ENCODE measurements at regions of chr3 and their contacts with region 1.

Region 1: GRCh38 chr3:181326637-181327223 is 337.2 kb upstream of the DNAJC19 start:
- DNase-seq: no peak
- ATAC-seq: peak; percentile 77
- H3K4me3 ChIP-seq: no peak overlapping the region
- H3K27ac ChIP-seq: no peak overlapping the region
- H3K4me1 ChIP-seq: no peaks in the 10 kb centered on the region
- H3K27me3 ChIP-seq: no peaks in the 10 kb centered on the region
- CTCF ChIP-seq: peak; percentile 59 to 65 (median 64)
- EP300 ChIP-seq: no peak
- POLR2A ChIP-seq: no peak
- RAD21 ChIP-seq: peak; percentile 72

Region 2: GRCh38 chr3:181344331-181344730 is 17.6 kb after region 1 on chr3:
- CTCF ChIA-PET with region 1: interaction called, 11 read pairs
- POLR2A ChIA-PET with region 1: no interaction called
- RAD21 ChIA-PET with region 1: no interaction called
- SMC1A ChIA-PET with region 1: interaction called, 4 read pairs
- in situ Hi-C with region 1: no loop called
- intact Hi-C with region 1: no loop called
- DNase-seq: no peak
- ATAC-seq: no peak
- H3K4me3 ChIP-seq: no peak overlapping the region
- H3K27ac ChIP-seq: no peak overlapping the region
- H3K4me1 ChIP-seq: no peaks in the 10 kb centered on the region
- H3K27me3 ChIP-seq: no peaks in the 10 kb centered on the region
- CTCF ChIP-seq: no peak
- EP300 ChIP-seq: no peak
- POLR2A ChIP-seq: no peak
- RAD21 ChIP-seq: no peak

Region 3: DNA sequence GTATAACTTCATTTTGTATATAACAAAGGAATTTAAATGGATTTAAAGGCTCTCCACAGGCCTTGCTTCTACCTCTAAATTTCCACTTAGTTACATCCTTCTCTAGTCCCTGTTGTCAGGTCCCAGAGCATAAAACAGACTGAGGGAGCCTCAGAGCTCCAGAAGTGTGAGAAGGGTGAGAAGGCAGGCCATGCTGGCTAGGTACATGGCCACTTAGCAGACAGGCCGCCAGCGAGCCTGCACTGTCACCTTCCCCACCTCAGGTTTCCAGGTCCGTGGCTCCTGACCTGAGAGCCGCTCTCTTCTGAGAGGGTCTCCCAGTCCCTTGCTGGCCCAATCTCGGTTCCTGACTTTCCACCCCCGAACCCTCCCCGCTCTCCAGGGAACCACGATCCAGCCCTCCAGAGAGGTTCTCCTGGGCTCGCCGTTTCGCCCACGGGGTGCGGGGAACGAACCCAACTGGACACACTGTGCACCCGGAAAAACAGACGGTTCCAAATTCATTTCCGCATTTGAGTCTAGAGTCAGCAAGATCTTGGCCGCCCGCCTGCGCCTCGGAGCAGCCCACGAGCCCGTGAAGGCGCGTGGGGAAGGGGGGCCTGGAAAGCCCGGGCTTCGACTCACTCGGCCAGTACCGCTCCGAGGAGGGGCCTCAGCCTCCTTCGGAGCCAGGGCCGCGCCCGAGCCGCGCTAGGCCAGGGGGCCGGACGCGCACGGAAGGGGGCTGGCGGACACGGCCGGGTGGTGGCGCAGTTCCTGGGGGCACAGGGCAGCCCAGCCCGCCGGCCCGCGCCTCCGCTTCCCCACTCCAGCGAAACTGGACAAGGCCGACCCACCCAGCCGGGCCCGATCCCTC is 368.3 kb after region 1 on chr3:
- CTCF ChIA-PET with region 1: interaction called, 10 read pairs
- POLR2A ChIA-PET with region 1: no interaction called
- RAD21 ChIA-PET with region 1: interaction called, 12 read pairs
- SMC1A ChIA-PET with region 1: interaction called, 6 read pairs
- in situ Hi-C with region 1: loop called (anchors 10 kb)
- intact Hi-C with region 1: loop called (anchors 1 kb)
- DNase-seq: no peak
- ATAC-seq: no peak; the same call in 2 of the 3 replicates
- H3K4me3 ChIP-seq: no peak overlapping the region
- H3K27ac ChIP-seq: no peak overlapping the region
- H3K4me1 ChIP-seq: no peaks in the 10 kb centered on the region
- H3K27me3 ChIP-seq: peaks cover 8 to 15% of the 10 kb centered on the region in 2 experiments
- CTCF ChIP-seq: no peak
- EP300 ChIP-seq: no peak
- POLR2A ChIP-seq: no peak
- RAD21 ChIP-seq: no peak

Region 4: GRCh38 chr3:181839039-181839915 is 512.5 kb after region 1 on chr3:
- CTCF ChIA-PET with region 1: no interaction called
- POLR2A ChIA-PET with region 1: no interaction called
- RAD21 ChIA-PET with region 1: no interaction called
- SMC1A ChIA-PET with region 1: no interaction called
- in situ Hi-C with region 1: no loop called
- intact Hi-C with region 1: no loop called
- DNase-seq: no peak
- ATAC-seq: no peak; the same call in 1 of the 3 replicates
- H3K4me3 ChIP-seq: peak overlapping the region; percentile 47; the same call in 1 of the 2 replicates
- H3K27ac ChIP-seq: no peak overlapping the region; the same call in 1 of the 2 replicates
- H3K4me1 ChIP-seq: no peaks in the 10 kb centered on the region; the same call in 1 of the 2 replicates
- H3K27me3 ChIP-seq: no peaks in the 10 kb centered on the region
- CTCF ChIP-seq: no peak
- EP300 ChIP-seq: no peak
- POLR2A ChIP-seq: no peak
- RAD21 ChIP-seq: no peak